BJ (cell line): ENCODE measurements at regions of chr16 and their contacts with region 1.

Region 1: DNA sequence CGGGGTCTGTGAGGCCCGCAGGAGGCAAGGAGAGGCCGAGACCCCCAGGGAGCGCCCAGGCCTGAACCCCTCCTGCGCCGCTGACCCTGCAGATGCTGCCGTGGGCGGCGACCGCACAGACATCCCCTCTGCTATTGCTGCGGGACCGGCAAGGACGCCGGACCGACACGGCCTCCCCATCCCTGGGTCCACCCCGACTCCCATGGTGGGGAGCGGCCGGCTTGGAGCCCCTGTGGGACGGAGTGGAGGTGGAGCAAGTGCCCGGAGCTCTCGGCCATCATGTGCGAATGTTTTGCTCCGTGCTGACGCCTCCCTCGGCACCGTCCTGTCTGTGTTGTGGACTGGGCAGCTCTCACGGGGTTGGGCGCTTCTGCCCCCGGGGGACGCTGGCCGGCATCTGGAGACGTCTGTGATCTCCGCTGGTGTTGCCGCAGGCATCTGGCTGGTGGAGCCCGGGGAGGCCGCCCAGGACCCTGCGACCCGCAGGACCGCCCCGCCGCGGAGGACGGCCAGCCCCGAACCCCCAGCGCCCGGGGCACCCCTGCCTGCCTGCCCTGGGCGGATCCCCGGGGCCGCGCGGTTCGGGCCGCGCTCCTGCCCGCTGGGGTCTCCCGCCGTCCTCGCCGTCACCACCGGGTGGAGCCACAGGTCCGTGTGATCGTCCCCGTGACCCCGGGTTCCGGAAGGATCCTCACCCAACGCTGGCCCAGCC is 12.8 kb upstream of the GNG13 start:
- DNase-seq: no peak
- H3K4me3 ChIP-seq: peak overlapping the region; percentile 34
- H3K27me3 ChIP-seq: no peaks in the 10 kb centered on the region
- CTCF ChIP-seq: peak; percentile 68

Region 2: GRCh38 chr16:886084-886543 is 72.8 kb after region 1 on chr16:
- CTCF ChIA-PET with region 1: no interaction called
- POLR2A ChIA-PET with region 1: no interaction called
- DNase-seq: no peak
- H3K4me3 ChIP-seq: no peak overlapping the region
- H3K27me3 ChIP-seq: no peaks in the 10 kb centered on the region
- CTCF ChIP-seq: no peak

Region 3: DNA sequence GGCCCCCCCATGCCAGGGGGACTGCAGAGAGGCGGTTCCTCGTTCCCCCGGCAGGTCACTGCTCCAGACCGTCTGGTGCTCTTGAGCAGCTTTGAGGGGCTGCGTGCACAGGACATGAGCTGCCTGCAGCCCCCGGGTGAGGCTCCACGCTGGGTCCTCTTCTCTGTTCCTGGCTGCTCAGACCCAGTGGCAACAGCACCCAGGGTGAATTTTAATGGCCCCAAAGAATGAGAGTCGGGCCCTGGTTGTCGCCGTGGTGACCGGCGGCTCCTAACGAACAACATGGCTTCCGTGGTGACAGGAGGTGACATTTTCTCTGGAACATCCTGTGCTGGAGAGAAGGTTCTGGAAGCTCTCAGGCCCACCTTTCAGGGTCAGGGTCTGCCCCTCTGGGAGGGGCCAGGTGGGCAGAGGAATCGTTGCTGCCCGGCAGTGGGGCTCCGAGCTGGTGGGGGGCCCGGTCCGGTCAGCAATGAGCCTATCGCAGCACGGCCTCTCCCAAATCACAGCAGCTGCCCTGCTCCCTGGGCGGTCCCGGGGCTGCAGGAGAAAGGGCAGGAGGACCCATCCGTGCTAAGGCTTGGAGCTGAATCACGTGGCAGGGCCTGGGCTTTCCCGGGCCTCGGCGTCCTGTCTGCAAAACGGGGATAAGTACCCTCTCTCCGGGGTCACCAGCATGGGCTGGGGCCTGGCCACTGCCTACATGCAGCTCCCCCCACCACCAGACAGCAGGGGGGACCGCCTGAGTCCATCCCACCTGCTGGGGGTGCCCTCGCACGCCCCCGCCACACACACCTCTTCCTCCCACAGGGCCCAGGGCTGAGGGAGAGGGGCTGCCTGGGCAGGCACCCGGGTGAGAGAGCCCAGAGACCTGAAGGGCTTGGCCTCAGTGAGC is 286.1 kb after region 1 on chr16:
- CTCF ChIA-PET with region 1: interaction called, 10 read pairs
- POLR2A ChIA-PET with region 1: no interaction called
- DNase-seq: no peak
- H3K4me3 ChIP-seq: no peak overlapping the region
- H3K27me3 ChIP-seq: no peaks in the 10 kb centered on the region; the same call in 1 of the 2 replicates
- CTCF ChIP-seq: no peak